ENCODE measurements at regions of chr20 and their contacts with region 1.

Region 1: GRCh38 chr20:46111028-46111835 is 6.9 kb upstream of the CD40 start:
- DNase-seq: no peak
- ATAC-seq: peak; percentile 53
- H3K4me3 Mint-ChIP-seq: peak overlapping the region; percentile 54
- H3K27ac Mint-ChIP-seq: peak overlapping the region; percentile 79
- H3K4me1 Mint-ChIP-seq: peaks cover 75% of the 10 kb centered on the region
- H3K27me3 Mint-ChIP-seq: no peaks in the 10 kb centered on the region
- CTCF ChIP-seq: no peak

Region 2: GRCh38 chr20:45368221-45368980 is 742.8 kb before region 1 on chr20:
- CTCF ChIA-PET with region 1: no interaction called
- POLR2A ChIA-PET with region 1: no interaction called
- intact Hi-C with region 1: loop called (anchors 5 kb)
- DNase-seq: peak; percentile 52
- ATAC-seq: peak; percentile 82
- H3K4me3 Mint-ChIP-seq: peak overlapping the region; percentile 77
- H3K27ac Mint-ChIP-seq: peak overlapping the region; percentile 86
- H3K4me1 Mint-ChIP-seq: peaks cover 91% of the 10 kb centered on the region
- H3K27me3 Mint-ChIP-seq: no peaks in the 10 kb centered on the region
- CTCF ChIP-seq: no peak

Region 3: GRCh38 chr20:46099491-46100287 is 11.5 kb before region 1 on chr20:
- CTCF ChIA-PET with region 1: interaction called, 8 read pairs
- POLR2A ChIA-PET with region 1: interaction called, 13 read pairs
- intact Hi-C with region 1: loop called (anchors 1 kb)
- DNase-seq: peak; percentile 62
- ATAC-seq: peak; percentile 100
- H3K4me3 Mint-ChIP-seq: peak overlapping the region; percentile 74
- H3K27ac Mint-ChIP-seq: peak overlapping the region; percentile 50
- H3K4me1 Mint-ChIP-seq: peaks cover 16% of the 10 kb centered on the region
- H3K27me3 Mint-ChIP-seq: peaks cover 1% of the 10 kb centered on the region
- CTCF ChIP-seq: no peak

Region 4: GRCh38 chr20:46169245-46170171 is 58.3 kb after region 1 on chr20:
- CTCF ChIA-PET with region 1: no interaction called
- POLR2A ChIA-PET with region 1: interaction called, 10 read pairs
- intact Hi-C with region 1: no loop called
- DNase-seq: no peak
- ATAC-seq: no peak
- H3K4me3 Mint-ChIP-seq: no peak overlapping the region
- H3K27ac Mint-ChIP-seq: no peak overlapping the region
- H3K4me1 Mint-ChIP-seq: no peaks in the 10 kb centered on the region
- H3K27me3 Mint-ChIP-seq: peaks cover 43% of the 10 kb centered on the region
- CTCF ChIP-seq: no peak